Left colon (tissue), 2 donors: ENCODE measurements at regions of chr7 and their contacts with region 1.

Region 1: DNA sequence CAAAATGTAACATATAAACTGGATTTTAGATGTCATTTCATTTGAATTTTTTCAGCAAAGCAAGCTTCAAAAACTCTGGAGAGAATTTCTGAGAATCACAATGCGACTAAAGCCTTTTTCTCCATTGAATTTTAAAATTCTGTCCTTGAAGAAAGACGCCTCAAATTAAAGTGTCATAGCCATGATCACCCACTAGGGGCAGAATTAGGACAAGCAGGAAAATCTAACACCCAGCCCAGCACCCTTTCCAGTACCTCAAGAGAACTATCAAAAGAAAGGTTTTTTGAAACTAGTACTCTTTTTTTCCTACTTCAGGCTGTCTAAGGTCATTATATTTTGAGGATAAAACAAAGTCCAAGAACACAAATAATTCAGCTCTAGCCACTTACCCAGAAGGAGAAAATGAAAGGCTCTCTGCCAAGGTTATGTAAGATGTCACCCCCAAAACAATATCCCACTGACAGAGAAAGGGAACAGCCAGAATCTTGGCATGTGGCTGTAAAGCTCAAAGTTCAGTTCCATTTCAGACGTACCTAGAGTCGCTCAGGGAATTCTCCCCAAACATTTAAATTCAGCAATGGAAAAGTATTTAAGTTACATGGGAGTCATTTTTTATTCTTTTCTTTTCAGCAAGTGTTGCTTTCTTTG is 299.4 kb downstream of the SNX13 start:
- DNase-seq: no peak
- ATAC-seq: peak; percentile 34

Region 2: GRCh38 chr7:16982640-16983350 is 658.1 kb before region 1 on chr7:
- intact Hi-C with region 1: loop called in 1 of 2 experiments (anchors 10 kb)
- DNase-seq: no peak
- ATAC-seq: peak; percentile 68

Region 3: GRCh38 chr7:17844514-17845196 is 203.8 kb after region 1 on chr7:
- intact Hi-C with region 1: no loop called
- DNase-seq: no peak
- ATAC-seq: no peak